ENCODE measurements at regions of chr15 and their contacts with region 1.

Region 1: GRCh38 chr15:64640146-64640871 is 135.1 kb downstream of the RBPMS2 start:
- DNase-seq: no peak
- H3K4me3 ChIP-seq: no peak overlapping the region
- H3K4me3 Mint-ChIP-seq: no peak overlapping the region
- H3K27ac Mint-ChIP-seq: peak overlapping the region; percentile 84
- H3K4me1 ChIP-seq: peaks cover 81% of the 10 kb centered on the region
- H3K4me1 Mint-ChIP-seq: peaks cover 59% of the 10 kb centered on the region
- H3K27me3 ChIP-seq: no peaks in the 10 kb centered on the region
- H3K27me3 Mint-ChIP-seq: no peaks in the 10 kb centered on the region
- CTCF ChIP-seq: no peak

Region 2: DNA sequence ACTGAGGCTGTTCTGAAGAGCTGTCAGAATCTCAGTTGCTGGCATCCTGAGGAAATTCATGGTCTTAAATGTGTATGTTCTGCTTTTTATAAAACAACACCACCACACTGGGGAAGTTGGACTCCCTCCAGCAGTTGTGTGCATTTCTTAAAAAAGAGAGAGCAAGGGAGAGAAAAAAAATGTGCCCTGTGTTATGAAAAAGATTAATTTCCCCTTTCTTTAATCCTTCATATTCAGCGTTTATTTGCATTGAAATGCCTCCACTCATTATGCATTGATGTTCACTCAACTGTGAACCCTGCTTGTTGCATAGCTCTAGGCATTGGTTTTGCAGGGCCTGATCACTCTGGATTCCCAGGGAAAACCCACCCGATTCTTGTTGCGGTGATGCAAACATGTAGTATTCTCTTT is 184.3 kb before region 1 on chr15:
- CTCF ChIA-PET with region 1: no interaction called
- POLR2A ChIA-PET with region 1: no interaction called
- intact Hi-C with region 1: loop called (anchors 5 kb)
- DNase-seq: no peak
- H3K4me3 ChIP-seq: no peak overlapping the region
- H3K4me3 Mint-ChIP-seq: no peak overlapping the region
- H3K27ac Mint-ChIP-seq: no peak overlapping the region
- H3K4me1 ChIP-seq: peaks cover 47% of the 10 kb centered on the region
- H3K4me1 Mint-ChIP-seq: peaks cover 37% of the 10 kb centered on the region
- H3K27me3 ChIP-seq: no peaks in the 10 kb centered on the region
- H3K27me3 Mint-ChIP-seq: no peaks in the 10 kb centered on the region
- CTCF ChIP-seq: no peak

Region 3: GRCh38 chr15:64678126-64678819 is 38.0 kb after region 1 on chr15:
- CTCF ChIA-PET with region 1: no interaction called
- POLR2A ChIA-PET with region 1: no interaction called
- intact Hi-C with region 1: no loop called
- DNase-seq: no peak
- H3K4me3 ChIP-seq: no peak overlapping the region
- H3K4me3 Mint-ChIP-seq: no peak overlapping the region
- H3K27ac Mint-ChIP-seq: no peak overlapping the region
- H3K4me1 ChIP-seq: no peaks in the 10 kb centered on the region
- H3K4me1 Mint-ChIP-seq: no peaks in the 10 kb centered on the region
- H3K27me3 ChIP-seq: no peaks in the 10 kb centered on the region
- H3K27me3 Mint-ChIP-seq: no peaks in the 10 kb centered on the region
- CTCF ChIP-seq: no peak

Measured in Caco-2 (cell line).